ENCODE measurements at regions of chr3 and their contacts with region 1.

Region 1: GRCh38 chr3:46705022-46705530 is 3.9 kb downstream of the TMIE start:
- DNase-seq: peak; percentile 79
- ATAC-seq: peak; percentile 84 to 89
- H3K4me3 ChIP-seq: no peak overlapping the region
- H3K27ac ChIP-seq: no peak overlapping the region
- H3K4me1 ChIP-seq: peaks cover 17% of the 10 kb centered on the region
- H3K27me3 ChIP-seq: peaks cover 20% of the 10 kb centered on the region
- CTCF ChIP-seq: peak; percentile 98

Region 2: GRCh38 chr3:46585799-46586693 is 119.0 kb before region 1 on chr3:
- intact Hi-C with region 1: no loop called
- DNase-seq: no peak
- ATAC-seq: no peak
- H3K4me3 ChIP-seq: no peak overlapping the region
- H3K27ac ChIP-seq: no peak overlapping the region
- H3K4me1 ChIP-seq: no peaks in the 10 kb centered on the region
- H3K27me3 ChIP-seq: no peaks in the 10 kb centered on the region
- CTCF ChIP-seq: no peak

Region 3: DNA sequence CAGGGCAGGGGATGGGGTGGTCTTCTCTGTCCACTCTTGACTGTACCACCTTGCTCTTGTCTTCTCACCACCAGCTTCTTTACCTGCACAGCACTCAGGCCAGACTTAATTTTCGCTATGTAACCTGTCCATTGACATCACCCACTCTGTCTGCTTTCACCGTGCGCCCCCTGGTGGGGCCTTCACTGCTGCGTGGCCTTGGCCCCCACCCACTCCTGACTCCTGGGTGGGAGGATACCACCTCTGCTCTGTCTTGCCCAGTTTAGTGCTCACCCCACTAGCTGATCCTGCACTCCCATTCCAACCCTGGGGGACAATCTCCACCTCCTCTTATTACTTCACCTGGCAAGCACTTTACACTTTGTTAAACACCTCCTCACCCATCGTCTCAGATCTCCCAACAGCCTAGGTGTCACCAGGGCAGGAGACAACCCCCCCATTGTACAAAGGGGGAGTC is 190.2 kb after region 1 on chr3:
- intact Hi-C with region 1: loop called (anchors 10 kb)
- DNase-seq: peak; percentile 82
- ATAC-seq: peak; percentile 48 to 66
- H3K4me3 ChIP-seq: no peak overlapping the region
- H3K27ac ChIP-seq: no peak overlapping the region
- H3K4me1 ChIP-seq: peaks cover 30% of the 10 kb centered on the region
- H3K27me3 ChIP-seq: peaks cover 28% of the 10 kb centered on the region
- CTCF ChIP-seq: peak; percentile 89

Region 4: GRCh38 chr3:46965151-46965550 is 260.1 kb after region 1 on chr3:
- intact Hi-C with region 1: no loop called
- DNase-seq: no peak
- ATAC-seq: peak; percentile 57 to 59
- H3K4me3 ChIP-seq: no peak overlapping the region
- H3K27ac ChIP-seq: peak overlapping the region; percentile 51
- H3K4me1 ChIP-seq: peaks cover 83% of the 10 kb centered on the region
- H3K27me3 ChIP-seq: no peaks in the 10 kb centered on the region
- CTCF ChIP-seq: no peak